ENCODE measurements at regions of chr6 and their contacts with region 1.

Region 1: DNA sequence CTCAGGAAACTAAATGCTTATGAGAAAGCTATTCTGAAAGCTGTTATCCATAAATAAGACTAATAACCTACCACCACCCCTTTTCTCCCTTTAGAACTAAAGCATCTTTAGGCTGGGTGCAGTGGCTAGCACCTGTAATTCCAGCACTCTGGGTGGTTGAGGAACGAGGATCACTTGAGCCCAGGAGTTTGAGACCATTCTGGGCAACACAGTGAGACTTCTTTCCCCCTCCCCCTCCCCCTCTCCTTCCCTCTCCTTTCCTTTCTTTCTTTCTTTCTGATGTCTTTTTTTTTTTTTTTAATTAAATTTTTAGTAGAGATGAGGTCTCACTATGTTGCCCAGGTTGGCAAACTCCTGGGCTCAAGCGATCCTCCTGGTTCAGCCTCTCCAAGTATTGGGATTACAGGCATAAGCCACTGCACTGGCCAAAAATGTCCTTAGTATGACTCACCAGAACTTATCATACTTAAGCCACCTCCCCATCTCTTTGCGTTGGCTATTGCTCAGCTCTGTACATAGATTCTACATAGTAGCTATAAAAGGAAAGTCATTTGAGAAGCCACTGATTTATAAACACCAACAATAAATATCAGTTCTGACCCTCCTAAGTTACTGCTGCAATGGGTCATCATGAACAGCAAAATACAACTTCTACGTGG is 54.8 kb upstream of the SPDEF start:
- DNase-seq: no peak

Region 2: DNA sequence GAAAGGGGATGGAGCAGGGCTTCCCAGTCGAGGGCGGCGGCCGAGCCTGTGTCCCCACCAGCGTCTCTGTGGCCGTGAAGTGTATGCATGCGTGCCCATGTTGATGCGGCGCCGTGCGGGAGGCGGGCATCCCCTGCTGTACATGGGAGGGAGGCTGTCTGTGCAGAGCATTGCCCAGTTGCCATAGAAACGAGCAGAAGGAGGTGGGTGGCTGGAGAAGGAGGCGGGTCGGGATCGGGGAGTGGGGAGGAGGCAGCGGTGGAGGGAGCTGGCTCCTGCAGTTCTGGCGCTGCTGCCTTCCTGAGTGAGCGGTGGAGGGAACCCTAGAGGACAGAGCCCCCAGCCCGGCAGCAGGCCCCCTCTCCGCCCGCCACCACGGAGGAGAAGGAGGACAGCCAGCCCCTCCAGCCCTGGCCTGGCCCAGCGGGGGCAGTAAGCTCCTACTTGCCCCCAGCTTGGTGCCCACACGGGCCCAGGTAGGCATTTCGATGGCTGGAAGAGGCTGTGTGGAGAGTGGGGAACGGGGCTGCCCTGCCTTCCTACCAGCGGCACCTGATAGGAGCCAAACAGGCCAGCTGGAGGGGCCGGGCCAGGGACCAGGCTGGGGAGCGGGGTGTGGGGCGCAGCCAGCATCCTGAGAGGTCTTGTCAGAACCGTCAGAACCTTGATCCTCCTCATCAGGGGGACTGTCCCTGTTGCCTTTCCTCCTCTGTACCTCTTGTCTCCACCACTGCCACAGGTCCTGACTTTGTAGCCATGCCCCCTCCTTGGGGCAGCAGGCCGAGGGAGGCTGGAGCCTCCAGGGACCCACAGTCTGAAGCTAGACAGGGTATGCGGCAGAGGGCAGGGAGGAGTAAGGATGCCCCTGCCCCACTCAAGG is 96.1 kb before region 1 on chr6:
- in situ Hi-C with region 1: loop called (anchors 25 kb)
- DNase-seq: peak; percentile 95

Region 3: DNA sequence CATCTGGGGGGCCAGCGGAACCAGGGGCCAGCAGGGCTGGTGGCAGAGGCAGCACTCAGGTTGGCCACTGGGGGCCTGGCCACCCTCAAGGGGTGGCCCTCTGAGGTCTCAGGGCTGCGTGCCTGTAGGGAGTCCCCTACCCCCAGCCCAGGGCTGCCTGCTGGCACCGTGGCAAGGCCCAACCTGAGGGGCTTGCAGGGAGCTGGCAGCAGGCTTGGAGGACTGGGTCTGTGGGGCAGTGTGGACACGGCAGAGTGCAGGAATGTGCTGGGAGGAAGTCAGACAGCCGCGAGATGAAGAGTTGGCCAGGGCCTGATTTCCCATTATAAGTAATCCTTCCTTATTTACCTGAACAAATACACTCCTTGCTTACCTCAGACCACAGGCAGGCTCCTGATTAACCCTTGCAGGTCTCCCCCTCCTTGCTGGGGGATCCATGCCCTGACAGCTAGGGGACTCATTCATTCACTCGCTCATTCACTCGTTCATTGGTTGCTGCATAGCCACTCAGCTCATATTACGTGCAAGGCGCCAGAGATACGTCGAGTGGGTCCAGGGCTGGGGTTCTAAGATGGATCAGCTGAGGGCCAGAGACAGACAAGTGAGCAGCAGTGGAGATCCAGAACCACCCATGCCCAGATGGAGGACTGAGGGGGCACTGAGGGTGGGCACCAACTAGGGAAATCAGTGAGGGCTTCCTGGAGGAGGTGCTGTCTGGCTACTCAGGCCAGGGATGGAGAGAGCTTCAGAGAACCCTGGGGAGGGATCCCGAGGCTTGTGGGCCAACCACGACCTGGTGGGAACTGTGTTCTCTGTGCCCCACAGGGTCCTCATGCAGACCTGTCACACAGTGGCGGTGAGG is 54.7 kb before region 1 on chr6 and contains the start of gene SPDEF:
- in situ Hi-C with region 1: no loop called
- DNase-seq: no peak
- total RNA-seq, gene SPDEF: 0.12 TPM in 1 of 2 replicates, not detected in the other

Measured in G401 (cell line).